PC-9 (cell line): ENCODE measurements at regions of chr20 and their contacts with region 1.

Region 1: DNA sequence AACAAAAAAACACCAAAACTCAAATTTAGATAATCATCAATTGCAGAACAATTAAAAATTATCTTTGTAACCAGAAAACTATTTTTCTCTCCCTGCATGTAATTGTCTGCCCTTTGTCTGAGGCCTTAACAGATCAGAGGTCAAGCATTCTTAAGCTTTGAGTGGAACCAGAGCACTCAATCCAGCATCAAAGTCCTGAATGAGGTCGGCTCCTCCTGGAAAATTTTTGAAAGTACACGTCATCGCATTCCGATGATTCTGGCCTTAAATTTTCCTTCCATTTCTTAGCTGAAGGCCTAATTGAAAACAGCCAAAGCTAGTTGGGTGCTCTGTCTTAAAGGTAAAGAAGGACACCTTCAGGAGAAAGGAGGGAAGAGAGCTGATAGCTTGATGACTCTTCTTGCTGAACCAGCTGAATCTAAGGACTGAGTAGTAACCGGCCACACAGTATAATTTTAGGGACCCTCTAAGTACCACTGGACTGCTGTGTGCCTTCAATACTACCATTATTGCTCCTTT is 510.2 kb upstream of the SULF2 start:
- DNase-seq: peak; percentile 84 to 99
- H3K4me3 ChIP-seq: no peak overlapping the region
- H3K27ac ChIP-seq: peak overlapping the region; percentile 87
- H3K4me1 ChIP-seq: peaks cover 59% of the 10 kb centered on the region
- H3K27me3 ChIP-seq: no peaks in the 10 kb centered on the region
- CTCF ChIP-seq: peak; percentile 76

Region 2: GRCh38 chr20:47196091-47197081 is 1099.1 kb before region 1 on chr20:
- CTCF ChIA-PET with region 1: no interaction called
- POLR2A ChIA-PET with region 1: no interaction called
- intact Hi-C with region 1: loop called (anchors 5 kb)
- DNase-seq: peak; percentile 72 to 82
- H3K4me3 ChIP-seq: no peak overlapping the region
- H3K27ac ChIP-seq: no peak overlapping the region
- H3K4me1 ChIP-seq: 0 out of 2 replicates have a peak, but pooled peaks cover 10% of the 10 kb centered on the region
- H3K27me3 ChIP-seq: no peaks in the 10 kb centered on the region
- CTCF ChIP-seq: peak; percentile 99

Region 3: DNA sequence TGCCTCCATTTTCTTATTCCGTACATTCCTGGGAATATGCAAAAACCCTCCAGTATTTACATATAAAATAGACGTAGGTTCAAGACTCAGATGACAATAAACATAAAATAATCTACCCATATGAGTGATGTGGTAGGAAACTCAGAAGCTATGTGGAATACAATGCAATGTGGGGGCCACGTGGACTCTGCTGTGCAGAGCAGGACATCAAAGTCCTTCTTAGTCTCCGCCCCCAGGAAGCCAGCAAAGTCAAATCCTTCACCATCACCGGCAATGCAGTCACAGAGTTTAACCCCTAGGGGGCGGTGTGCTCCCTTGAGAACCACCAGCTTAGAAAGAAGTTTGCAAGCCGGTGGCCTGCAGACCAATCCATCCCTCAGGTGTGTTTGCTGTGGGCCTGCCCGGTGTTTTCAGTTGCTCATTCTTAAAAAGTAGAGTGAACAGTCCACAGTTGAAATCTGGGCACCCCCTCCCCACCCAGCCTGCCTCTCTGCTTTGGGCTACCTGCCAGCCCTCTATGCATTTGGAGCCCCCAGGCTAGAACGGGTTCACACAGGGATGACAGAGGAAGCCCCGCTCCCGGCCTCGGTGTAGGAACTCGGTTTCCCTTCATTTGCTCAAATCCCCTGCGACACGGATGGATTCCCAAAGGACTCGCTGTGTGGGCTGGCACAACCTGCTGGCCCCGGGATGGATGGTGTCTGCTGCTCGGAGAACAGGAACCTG is 570.1 kb before region 1 on chr20:
- CTCF ChIA-PET with region 1: interaction called, 4 read pairs
- POLR2A ChIA-PET with region 1: no interaction called
- intact Hi-C with region 1: loop called (anchors 1 kb)
- DNase-seq: peak; percentile 84 to 86
- H3K4me3 ChIP-seq: no peak overlapping the region
- H3K27ac ChIP-seq: no peak overlapping the region
- H3K4me1 ChIP-seq: 0 out of 2 replicates have a peak, but pooled peaks cover 4% of the 10 kb centered on the region
- H3K27me3 ChIP-seq: no peaks in the 10 kb centered on the region
- CTCF ChIP-seq: peak; percentile 99

Region 4: GRCh38 chr20:47857566-47858471 is 437.7 kb before region 1 on chr20:
- CTCF ChIA-PET with region 1: interaction called, 4 read pairs
- POLR2A ChIA-PET with region 1: interaction called, 4 read pairs
- intact Hi-C with region 1: loop called (anchors 2 kb)
- DNase-seq: peak; percentile 70 to 76
- H3K4me3 ChIP-seq: peak overlapping the region; percentile 46
- H3K27ac ChIP-seq: peak overlapping the region; percentile 99
- H3K4me1 ChIP-seq: peaks cover 56% of the 10 kb centered on the region
- H3K27me3 ChIP-seq: no peaks in the 10 kb centered on the region
- CTCF ChIP-seq: 0 out of 2 replicates have a peak, but pooled peaks have one; percentile 14

Region 5: GRCh38 chr20:48012197-48013085 is 283.1 kb before region 1 on chr20:
- CTCF ChIA-PET with region 1: no interaction called
- POLR2A ChIA-PET with region 1: no interaction called
- intact Hi-C with region 1: loop called (anchors 1 kb)
- DNase-seq: peak; percentile 65 to 97
- H3K4me3 ChIP-seq: no peak overlapping the region
- H3K27ac ChIP-seq: peak overlapping the region; percentile 44
- H3K4me1 ChIP-seq: peaks cover 13% of the 10 kb centered on the region
- H3K27me3 ChIP-seq: no peaks in the 10 kb centered on the region
- CTCF ChIP-seq: peak; percentile 68

Region 6: GRCh38 chr20:48065824-48066660 is 229.5 kb before region 1 on chr20:
- CTCF ChIA-PET with region 1: no interaction called
- POLR2A ChIA-PET with region 1: no interaction called
- intact Hi-C with region 1: loop called (anchors 5 kb)
- DNase-seq: peak; percentile 15 to 78
- H3K4me3 ChIP-seq: no peak overlapping the region
- H3K27ac ChIP-seq: peak overlapping the region; percentile 85
- H3K4me1 ChIP-seq: peaks cover 34% of the 10 kb centered on the region
- H3K27me3 ChIP-seq: no peaks in the 10 kb centered on the region
- CTCF ChIP-seq: no peak

Region 7: DNA sequence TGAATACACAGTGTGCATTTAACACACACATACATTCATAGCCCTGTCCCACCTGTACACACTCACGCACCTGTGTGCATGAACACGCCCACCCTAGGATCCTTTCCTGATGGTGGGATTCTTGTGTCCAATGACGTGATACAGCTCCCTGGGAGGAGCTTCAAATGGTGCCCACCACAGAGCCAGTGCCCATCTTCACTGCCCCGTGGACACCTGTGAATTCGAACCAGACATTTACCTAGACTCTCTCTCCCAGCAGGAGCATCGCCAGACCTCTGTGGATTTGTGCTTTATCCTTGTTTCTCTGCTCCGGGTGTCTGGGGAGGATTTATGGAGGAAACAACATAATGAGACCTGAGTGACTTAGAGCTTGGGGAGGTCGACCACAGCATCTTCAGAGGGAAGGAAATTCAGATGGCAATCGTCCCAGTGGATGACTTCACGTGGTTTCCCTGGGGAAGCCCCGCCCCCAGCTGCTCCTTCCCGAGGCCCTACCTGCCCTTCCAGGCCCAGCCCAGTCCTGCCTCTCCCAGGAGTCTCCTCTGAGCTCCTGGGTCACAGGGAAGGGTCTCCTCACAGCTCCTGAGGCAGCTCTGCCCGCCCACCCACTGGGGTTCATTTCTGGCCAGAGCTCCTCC is 80.1 kb before region 1 on chr20:
- CTCF ChIA-PET with region 1: no interaction called
- POLR2A ChIA-PET with region 1: no interaction called
- intact Hi-C with region 1: loop called (anchors 2 kb)
- DNase-seq: peak; percentile 55 to 58
- H3K4me3 ChIP-seq: no peak overlapping the region
- H3K27ac ChIP-seq: peak overlapping the region; percentile 92
- H3K4me1 ChIP-seq: peaks cover 51% of the 10 kb centered on the region
- H3K27me3 ChIP-seq: no peaks in the 10 kb centered on the region
- CTCF ChIP-seq: no peak

Region 8: DNA sequence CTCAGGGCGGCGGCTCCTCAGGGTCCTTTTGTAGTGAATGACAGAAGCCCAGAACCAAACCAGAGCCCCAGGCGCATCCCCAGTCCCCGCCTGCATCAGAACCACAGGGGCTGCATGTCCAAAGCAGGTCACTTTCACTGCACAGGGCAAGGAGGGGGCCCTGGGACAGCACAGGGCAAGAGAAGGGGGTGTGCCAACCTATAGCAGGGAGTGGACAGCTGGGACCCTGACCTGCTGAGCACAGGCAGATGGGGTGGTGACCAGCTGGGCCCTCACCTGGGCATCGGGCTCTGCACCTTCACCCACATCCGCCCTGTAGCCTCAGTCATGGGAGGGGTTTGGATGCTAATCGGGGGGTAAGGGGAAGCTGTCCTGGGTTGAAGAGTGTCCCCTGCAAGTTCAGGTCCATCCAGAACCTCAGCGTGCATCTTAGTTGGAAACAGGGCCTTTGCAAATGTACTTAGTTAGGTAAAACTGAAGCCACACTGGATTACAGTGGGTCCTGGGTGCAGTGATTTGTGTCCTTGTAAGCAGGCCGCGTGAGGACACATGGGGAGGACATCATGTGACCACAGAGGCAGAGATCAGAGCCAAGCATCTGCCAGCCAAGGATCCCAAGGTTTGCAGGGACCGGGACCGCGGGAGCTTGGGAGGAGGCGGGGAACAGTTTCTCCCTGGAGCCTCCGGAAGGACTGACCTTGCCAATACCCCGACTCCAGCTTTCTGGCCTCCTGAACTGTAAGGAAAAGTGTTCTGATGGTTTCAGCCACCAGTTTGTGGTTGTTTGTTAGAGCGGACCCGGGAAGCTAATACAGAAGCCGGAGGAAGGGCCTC is 31.1 kb after region 1 on chr20:
- CTCF ChIA-PET with region 1: no interaction called
- POLR2A ChIA-PET with region 1: no interaction called
- intact Hi-C with region 1: no loop called
- DNase-seq: no peak
- H3K4me3 ChIP-seq: no peak overlapping the region
- H3K27ac ChIP-seq: no peak overlapping the region
- H3K4me1 ChIP-seq: peaks cover 17% of the 10 kb centered on the region
- H3K27me3 ChIP-seq: no peaks in the 10 kb centered on the region
- CTCF ChIP-seq: no peak